Dorsolateral prefrontal cortex (tissue), 120 donors: ENCODE measurements at regions of chr15 and their contacts with region 1.

Region 1: DNA sequence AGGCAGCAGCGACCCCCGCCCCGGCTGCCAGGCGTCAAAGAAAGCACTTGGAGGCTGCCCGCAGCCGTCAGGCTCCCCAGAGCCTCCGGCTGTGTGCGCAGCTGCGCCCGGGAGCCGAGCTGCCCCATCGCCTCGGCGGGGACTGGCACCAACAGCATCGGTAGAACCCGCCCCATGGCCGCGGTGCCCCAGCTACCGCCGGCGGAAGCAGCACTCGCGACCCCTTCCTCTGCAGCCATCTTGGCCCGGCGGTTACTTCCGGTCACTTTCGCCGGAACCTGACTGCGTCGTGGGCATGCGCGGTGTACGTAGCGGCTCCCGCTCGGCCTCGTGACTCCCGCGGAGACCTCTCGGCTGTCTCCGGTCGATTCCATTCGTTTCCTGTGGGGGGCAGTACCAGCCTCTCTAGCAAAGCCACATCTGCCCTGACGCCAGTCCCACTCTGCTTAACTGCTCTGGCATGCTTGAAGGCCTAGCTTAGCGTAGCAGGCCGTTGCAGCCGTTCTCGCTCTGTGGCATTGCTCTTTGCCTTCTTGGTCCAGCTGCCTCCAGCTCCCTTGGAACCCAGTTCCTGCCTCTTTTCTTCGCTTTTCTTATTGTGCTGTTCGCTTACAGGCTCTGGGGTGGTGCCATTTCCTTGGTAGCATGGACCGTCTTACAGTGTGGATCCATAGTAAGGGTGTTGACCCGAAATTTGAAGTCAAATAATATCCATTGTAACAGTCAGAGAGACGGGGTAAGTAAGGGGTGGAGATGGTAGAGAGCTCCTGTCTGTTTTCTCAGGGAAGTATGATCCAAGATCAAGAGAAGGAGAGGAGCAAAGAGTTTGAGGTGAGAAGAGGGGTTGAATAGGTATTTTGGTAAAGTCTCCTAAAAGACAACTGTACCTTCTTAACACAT is at the start of gene SPG11:
- DNase-seq: peak; percentile 93 to 98 (median 96)
- H3K4me3 ChIP-seq: peak within 1 kb of the TSS; percentile 61 to 100 (median 96)
- H3K27ac ChIP-seq: peak within 1 kb of the TSS; percentile 78 to 99 (median 97)
- H3K27me3 ChIP-seq: no peaks in the 10 kb centered on the region
- CTCF ChIP-seq: peak; percentile 86 to 99 (median 97)
- total RNA-seq, gene SPG11: 41.3 to 116 (median 77.5) TPM

Region 2: GRCh38 chr15:44788748-44789147 is 125.1 kb after region 1 on chr15:
- intact Hi-C with region 1: loop called in 1 of 2 experiments (anchors 5 kb)
- DNase-seq: no peak
- H3K4me3 ChIP-seq: no peak overlapping the region
- H3K27ac ChIP-seq: no peak overlapping the region
- H3K27me3 ChIP-seq: no peaks in the 10 kb centered on the region
- CTCF ChIP-seq: no peak